ENCODE measurements at regions of chr1 and their contacts with region 1.

Region 1: DNA sequence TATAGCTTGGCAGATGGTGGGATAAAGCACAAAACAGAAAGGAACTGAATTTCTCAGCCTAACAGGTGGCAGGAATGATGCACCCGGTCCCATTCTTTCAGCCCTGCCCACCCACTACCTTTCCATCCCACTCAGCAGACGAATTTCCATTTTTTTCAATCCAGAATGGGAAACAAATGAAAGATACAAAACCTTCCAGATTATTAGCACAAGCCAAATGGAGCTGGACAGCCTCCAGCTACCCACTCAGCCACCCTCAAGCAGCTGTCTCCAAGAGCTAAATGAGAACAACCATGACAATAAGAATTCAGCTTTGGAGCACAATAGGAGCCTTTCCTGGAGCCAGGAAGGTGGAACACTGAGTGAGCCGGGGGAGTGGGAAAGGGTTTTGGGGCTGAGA is 96.3 kb upstream of the ST6GALNAC5 start:
- DNase-seq: no peak
- H3K4me3 ChIP-seq: no peak overlapping the region
- H3K27ac ChIP-seq: no peak overlapping the region
- H3K4me1 ChIP-seq: no peaks in the 10 kb centered on the region
- H3K27me3 ChIP-seq: no peaks in the 10 kb centered on the region
- CTCF ChIP-seq: no peak
- EP300 ChIP-seq: no peak
- POLR2A ChIP-seq: no peak

Region 2: DNA sequence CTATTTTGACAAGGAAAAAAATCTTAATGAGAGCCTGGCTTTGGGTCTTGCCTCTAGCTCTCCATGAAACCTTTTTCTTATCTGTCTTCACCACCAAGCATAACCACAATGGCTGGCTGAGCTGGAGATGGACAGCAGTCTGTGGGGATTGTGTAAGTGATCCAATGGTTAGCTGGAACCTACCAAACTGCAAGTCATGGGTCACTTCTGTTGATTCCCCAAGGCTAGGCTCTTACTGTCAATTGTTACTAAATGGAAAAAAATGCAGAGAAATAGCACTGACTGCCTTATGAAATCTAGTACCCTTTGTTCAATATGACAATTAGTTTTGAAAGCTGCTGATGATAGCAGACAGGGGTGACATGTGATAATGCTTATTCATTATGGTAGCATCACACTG is 337.5 kb before region 1 on chr1:
- in situ Hi-C with region 1: no loop called
- intact Hi-C with region 1: no loop called
- DNase-seq: no peak
- H3K4me3 ChIP-seq: no peak overlapping the region
- H3K27ac ChIP-seq: no peak overlapping the region
- H3K4me1 ChIP-seq: no peaks in the 10 kb centered on the region
- H3K27me3 ChIP-seq: no peaks in the 10 kb centered on the region
- CTCF ChIP-seq: no peak
- EP300 ChIP-seq: no peak
- POLR2A ChIP-seq: no peak

Region 3: DNA sequence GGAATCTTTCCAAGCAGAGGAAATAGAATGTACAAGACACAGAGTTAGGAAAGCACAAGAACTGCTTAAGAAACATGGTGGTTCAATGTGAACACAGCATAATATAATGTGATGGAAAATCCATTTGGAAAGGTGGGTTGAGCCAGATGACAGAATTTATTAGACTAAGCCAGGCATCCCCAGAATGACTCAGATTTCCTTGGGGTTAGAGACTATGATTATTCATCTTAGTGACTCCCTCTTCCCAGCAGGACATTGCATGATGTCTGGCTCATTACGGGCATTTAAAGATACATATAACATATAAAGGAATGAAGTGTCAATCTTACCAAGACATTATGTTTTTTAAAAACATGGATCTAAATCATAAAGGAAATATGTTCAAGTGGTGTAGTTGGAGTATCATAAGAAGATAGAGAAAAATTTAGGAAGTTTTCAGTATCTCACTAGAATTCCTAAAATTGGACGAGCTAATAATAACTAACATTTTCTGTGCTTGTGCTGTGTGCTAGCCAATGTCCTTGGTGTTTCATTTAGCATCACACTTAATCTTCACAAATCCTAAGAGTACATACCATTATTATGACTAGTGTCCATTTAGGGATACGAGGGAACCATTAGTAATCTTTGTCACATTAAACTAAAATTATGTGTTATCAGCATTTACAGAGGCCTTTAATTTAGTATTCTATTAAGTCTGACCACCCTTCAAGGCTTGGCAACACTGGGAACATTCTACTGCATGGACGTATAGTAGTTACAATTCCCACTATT is 55.3 kb after region 1 on chr1:
- in situ Hi-C with region 1: no loop called
- intact Hi-C with region 1: loop called (anchors 2 kb)
- DNase-seq: no peak
- H3K4me3 ChIP-seq: no peak overlapping the region
- H3K27ac ChIP-seq: no peak overlapping the region
- H3K4me1 ChIP-seq: no peaks in the 10 kb centered on the region
- H3K27me3 ChIP-seq: no peaks in the 10 kb centered on the region
- CTCF ChIP-seq: no peak
- EP300 ChIP-seq: no peak
- POLR2A ChIP-seq: no peak